Activated CD4-positive, alpha-beta memory T cell treated with anti-CD3 and anti-CD28 coated beads, Interleukin-2, amount 10 ng/mL, durations not matched to agents 7 days and 5 days (primary cell): ENCODE measurements at regions of chr18 and their contacts with region 1.

Region 1: GRCh38 chr18:45879681-45880655 is 54.5 kb downstream of the SIGLEC15 start:
- DNase-seq: peak; percentile 70
- H3K4me3 Mint-ChIP-seq: no peak overlapping the region
- H3K27ac Mint-ChIP-seq: no peak overlapping the region
- H3K4me1 Mint-ChIP-seq: peaks cover 11% of the 10 kb centered on the region
- H3K27me3 Mint-ChIP-seq: no peaks in the 10 kb centered on the region

Region 2: GRCh38 chr18:45554389-45554737 is 325.6 kb before region 1 on chr18:
- CTCF ChIA-PET with region 1: no interaction called
- POLR2A ChIA-PET with region 1: no interaction called
- DNase-seq: no peak
- H3K4me3 Mint-ChIP-seq: no peak overlapping the region
- H3K27ac Mint-ChIP-seq: no peak overlapping the region
- H3K4me1 Mint-ChIP-seq: no peaks in the 10 kb centered on the region
- H3K27me3 Mint-ChIP-seq: peaks cover 2% of the 10 kb centered on the region

Region 3: GRCh38 chr18:45690975-45691815 is 188.8 kb before region 1 on chr18:
- CTCF ChIA-PET with region 1: interaction called, 56 read pairs
- POLR2A ChIA-PET with region 1: no interaction called
- DNase-seq: peak; percentile 78
- H3K4me3 Mint-ChIP-seq: no peak overlapping the region
- H3K27ac Mint-ChIP-seq: no peak overlapping the region
- H3K4me1 Mint-ChIP-seq: peaks cover 42% of the 10 kb centered on the region
- H3K27me3 Mint-ChIP-seq: peaks cover 32% of the 10 kb centered on the region

Region 4: GRCh38 chr18:45722899-45723298 is 157.1 kb before region 1 on chr18:
- CTCF ChIA-PET with region 1: interaction called, 95 read pairs
- POLR2A ChIA-PET with region 1: no interaction called
- DNase-seq: peak; percentile 76
- H3K4me3 Mint-ChIP-seq: no peak overlapping the region
- H3K27ac Mint-ChIP-seq: no peak overlapping the region
- H3K4me1 Mint-ChIP-seq: peaks cover 1% of the 10 kb centered on the region
- H3K27me3 Mint-ChIP-seq: peaks cover 11% of the 10 kb centered on the region

Region 5: DNA sequence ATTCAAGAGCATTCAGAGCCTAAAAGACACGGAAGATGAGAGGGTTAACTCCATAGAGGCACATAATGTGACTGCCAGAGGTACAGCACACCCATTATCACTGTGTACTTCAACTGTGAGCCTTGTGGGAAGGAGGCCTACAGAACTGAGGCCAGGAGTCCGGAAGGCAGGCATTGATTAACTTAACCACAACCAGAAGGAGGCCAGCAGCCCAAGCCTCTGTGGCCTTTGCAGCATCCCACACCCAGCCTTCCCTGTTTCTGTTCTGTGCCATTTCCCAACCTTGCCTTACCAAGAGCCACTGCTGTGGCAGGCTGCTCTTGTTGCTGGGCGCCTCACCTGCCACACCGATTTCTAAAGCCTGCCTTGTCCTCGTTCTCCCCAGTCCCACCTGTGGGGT is 27.3 kb before region 1 on chr18:
- CTCF ChIA-PET with region 1: interaction called, 13 read pairs
- POLR2A ChIA-PET with region 1: no interaction called
- DNase-seq: no peak
- H3K4me3 Mint-ChIP-seq: no peak overlapping the region
- H3K27ac Mint-ChIP-seq: no peak overlapping the region
- H3K4me1 Mint-ChIP-seq: no peaks in the 10 kb centered on the region
- H3K27me3 Mint-ChIP-seq: no peaks in the 10 kb centered on the region

Region 6: DNA sequence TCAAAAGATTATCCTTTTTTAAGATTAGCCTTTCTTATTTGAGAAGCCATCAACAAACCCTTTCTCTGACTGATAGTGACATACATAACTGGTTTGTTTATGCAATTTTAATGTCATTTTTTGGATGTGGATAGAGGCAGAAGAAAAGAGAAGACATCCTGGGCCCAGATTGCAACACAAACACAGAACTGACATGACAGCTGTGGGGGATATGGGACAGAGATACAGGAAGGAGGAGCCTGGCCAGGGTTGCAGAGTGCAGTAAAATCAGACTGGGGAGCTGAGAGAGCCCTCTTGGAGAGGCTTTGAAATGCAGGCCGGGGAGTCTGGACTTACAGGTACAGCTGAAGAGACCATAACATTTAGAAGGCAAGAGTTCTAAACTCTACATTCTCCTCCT is 10.6 kb after region 1 on chr18:
- CTCF ChIA-PET with region 1: interaction called, 12 read pairs
- POLR2A ChIA-PET with region 1: no interaction called
- DNase-seq: no peak
- H3K4me3 Mint-ChIP-seq: no peak overlapping the region
- H3K27ac Mint-ChIP-seq: no peak overlapping the region
- H3K4me1 Mint-ChIP-seq: no peaks in the 10 kb centered on the region
- H3K27me3 Mint-ChIP-seq: no peaks in the 10 kb centered on the region

Region 7: GRCh38 chr18:46402396-46402795 is 522.4 kb after region 1 on chr18:
- CTCF ChIA-PET with region 1: no interaction called
- POLR2A ChIA-PET with region 1: no interaction called
- DNase-seq: no peak
- H3K4me3 Mint-ChIP-seq: no peak overlapping the region
- H3K27ac Mint-ChIP-seq: no peak overlapping the region
- H3K4me1 Mint-ChIP-seq: peaks cover 9% of the 10 kb centered on the region
- H3K27me3 Mint-ChIP-seq: peaks cover 8% of the 10 kb centered on the region